ENCODE measurements at regions of chr5 and their contacts with region 1.

Region 1: GRCh38 chr5:56900858-56901578 is 8.4 kb upstream of the SETD9 start:
- DNase-seq: peak; percentile 38
- ATAC-seq: peak; percentile 84
- H3K4me3 ChIP-seq: no peak overlapping the region
- H3K27ac ChIP-seq: no peak overlapping the region
- H3K4me1 ChIP-seq: no peaks in the 10 kb centered on the region; the same call in 1 of the 2 replicates
- H3K27me3 ChIP-seq: no peaks in the 10 kb centered on the region; the same call in 1 of the 2 replicates
- CTCF ChIP-seq: peak; percentile 78
- POLR2A ChIP-seq: no peak
- RAD21 ChIP-seq: peak; percentile 72

Region 2: GRCh38 chr5:57137401-57137800 is 236.4 kb after region 1 on chr5:
- CTCF ChIA-PET with region 1: interaction called, 3 read pairs
- POLR2A ChIA-PET with region 1: no interaction called
- dilution Hi-C with region 1: no loop called
- in situ Hi-C with region 1: no loop called
- intact Hi-C with region 1: loop called (anchors 1 kb)
- DNase-seq: no peak
- ATAC-seq: no peak
- H3K4me3 ChIP-seq: no peak overlapping the region
- H3K27ac ChIP-seq: no peak overlapping the region
- H3K4me1 ChIP-seq: no peaks in the 10 kb centered on the region
- H3K27me3 ChIP-seq: peaks cover 1% of the 10 kb centered on the region; the same call in 1 of the 2 replicates
- CTCF ChIP-seq: no peak
- POLR2A ChIP-seq: no peak
- RAD21 ChIP-seq: no peak

Region 3: DNA sequence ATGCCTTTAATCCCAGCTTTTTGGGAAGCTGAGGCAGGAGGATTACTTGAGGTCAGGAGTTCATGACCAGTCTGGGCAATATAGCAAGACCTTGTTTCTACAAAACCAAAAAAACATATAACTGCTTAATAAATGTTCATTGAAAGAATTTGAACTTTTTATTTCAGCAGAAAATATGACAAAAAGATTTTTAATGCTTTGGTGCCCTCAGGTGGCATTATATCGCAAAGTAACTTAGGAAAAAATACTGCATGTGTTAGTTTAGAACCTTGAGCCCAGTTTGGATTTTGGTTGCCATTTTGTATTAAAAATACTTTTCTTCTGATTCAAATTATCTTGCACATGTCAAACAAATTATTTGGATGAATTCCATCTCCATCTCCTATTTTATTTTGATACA is 376.1 kb after region 1 on chr5:
- CTCF ChIA-PET with region 1: interaction called, 3 read pairs
- POLR2A ChIA-PET with region 1: no interaction called
- dilution Hi-C with region 1: no loop called
- in situ Hi-C with region 1: no loop called
- intact Hi-C with region 1: loop called (anchors 2 kb)
- DNase-seq: peak; percentile 40
- ATAC-seq: peak; percentile 66
- H3K4me3 ChIP-seq: no peak overlapping the region
- H3K27ac ChIP-seq: no peak overlapping the region
- H3K4me1 ChIP-seq: no peaks in the 10 kb centered on the region
- H3K27me3 ChIP-seq: no peaks in the 10 kb centered on the region
- CTCF ChIP-seq: peak; percentile 55
- POLR2A ChIP-seq: no peak
- RAD21 ChIP-seq: peak; percentile 57